ENCODE measurements at regions of chr10 and their contacts with region 1.

Region 1: GRCh38 chr10:122154545-122155366 is 116.3 kb upstream of the BTBD16 start:
- DNase-seq: peak; percentile 24
- H3K4me3 ChIP-seq: no peak overlapping the region
- H3K27ac ChIP-seq: no peak overlapping the region
- H3K4me1 ChIP-seq: peaks cover 11% of the 10 kb centered on the region
- H3K27me3 ChIP-seq: no peaks in the 10 kb centered on the region
- CTCF ChIP-seq: no peak

Region 2: DNA sequence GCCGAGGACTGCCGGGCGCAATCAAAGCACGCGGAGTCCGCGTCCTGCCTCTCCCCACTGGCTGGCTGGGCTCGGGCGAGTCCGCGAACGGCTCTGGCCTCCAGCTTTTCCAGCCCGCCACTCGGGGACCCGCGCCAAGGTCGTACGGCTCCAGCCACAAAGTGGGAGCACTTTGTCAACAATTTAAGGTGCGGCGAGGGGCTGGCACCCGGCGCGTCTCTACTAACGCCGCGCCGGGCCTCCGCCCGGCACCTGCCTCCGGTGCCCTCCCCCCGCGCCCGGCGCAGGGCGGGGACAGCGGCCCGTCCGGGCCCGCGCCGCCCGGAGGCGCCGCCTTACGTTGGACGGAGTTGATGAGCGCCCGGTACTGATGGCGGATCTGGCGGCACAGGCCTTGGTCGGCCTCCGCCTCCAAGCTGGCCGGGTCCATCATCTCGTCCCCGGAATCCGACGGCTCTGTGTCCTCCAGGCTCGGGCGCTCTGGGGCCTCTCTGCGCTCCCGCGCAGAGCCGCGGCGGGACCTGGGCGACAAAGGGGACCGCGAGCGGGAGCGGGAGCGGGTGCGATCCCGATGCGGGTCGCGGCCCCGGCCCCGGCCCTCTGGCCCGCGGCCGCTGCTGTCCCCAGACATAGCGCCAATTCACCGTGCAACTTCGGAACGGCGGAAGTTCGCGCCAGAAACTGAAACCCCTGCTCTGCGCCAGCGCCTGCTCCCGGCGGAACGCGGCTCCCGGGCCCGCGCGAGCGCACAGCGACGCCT is 180.0 kb before region 1 on chr10 and contains the start of gene NSMCE4A:
- CTCF ChIA-PET with region 1: no interaction called
- dilution Hi-C with region 1: no loop called
- in situ Hi-C with region 1: no loop called
- intact Hi-C with region 1: no loop called
- DNase-seq: peak; percentile 66
- H3K4me3 ChIP-seq: peak within 1 kb of the TSS; percentile 61 to 72 (median 62)
- H3K27ac ChIP-seq: peak within 1 kb of the TSS; percentile 65
- H3K4me1 ChIP-seq: peaks cover 10% of the 10 kb centered on the region
- H3K27me3 ChIP-seq: no peaks in the 10 kb centered on the region
- CTCF ChIP-seq: peak; percentile 47 to 64
- total RNA-seq, gene NSMCE4A: 14.5 to 28.6 TPM

Region 3: GRCh38 chr10:122232769-122233168 is 78.0 kb after region 1 on chr10:
- CTCF ChIA-PET with region 1: no interaction called
- dilution Hi-C with region 1: loop called (anchors 5 kb)
- in situ Hi-C with region 1: no loop called
- intact Hi-C with region 1: no loop called
- DNase-seq: no peak
- H3K4me3 ChIP-seq: no peak overlapping the region
- H3K27ac ChIP-seq: no peak overlapping the region
- H3K4me1 ChIP-seq: no peaks in the 10 kb centered on the region
- H3K27me3 ChIP-seq: no peaks in the 10 kb centered on the region
- CTCF ChIP-seq: no peak

Measured in mammary epithelial cell (primary cell).